Activated CD8-positive, alpha-beta T cell treated with anti-CD3 and anti-CD28 coated beads, Interleukin-2, amount 10 ng/mL, durations not matched to agents 7 days and 5 days (primary cell): ENCODE measurements at regions of chr19 and their contacts with region 1.

Region 1: GRCh38 chr19:45643024-45643926 is 4.1 kb upstream of the EML2 start:
- DNase-seq: peak; percentile 93
- ATAC-seq: peak; percentile 12
- H3K4me3 Mint-ChIP-seq: peak overlapping the region; percentile 54
- H3K27ac Mint-ChIP-seq: peak overlapping the region; percentile 87
- H3K4me1 Mint-ChIP-seq: peaks cover 65% of the 10 kb centered on the region
- H3K27me3 Mint-ChIP-seq: peaks cover 2% of the 10 kb centered on the region

Region 2: GRCh38 chr19:45346449-45346848 is 296.8 kb before region 1 on chr19:
- CTCF ChIA-PET with region 1: no interaction called
- POLR2A ChIA-PET with region 1: no interaction called
- DNase-seq: no peak
- ATAC-seq: no peak
- H3K4me3 Mint-ChIP-seq: no peak overlapping the region
- H3K27ac Mint-ChIP-seq: no peak overlapping the region
- H3K4me1 Mint-ChIP-seq: no peaks in the 10 kb centered on the region
- H3K27me3 Mint-ChIP-seq: peaks cover 7% of the 10 kb centered on the region

Region 3: DNA sequence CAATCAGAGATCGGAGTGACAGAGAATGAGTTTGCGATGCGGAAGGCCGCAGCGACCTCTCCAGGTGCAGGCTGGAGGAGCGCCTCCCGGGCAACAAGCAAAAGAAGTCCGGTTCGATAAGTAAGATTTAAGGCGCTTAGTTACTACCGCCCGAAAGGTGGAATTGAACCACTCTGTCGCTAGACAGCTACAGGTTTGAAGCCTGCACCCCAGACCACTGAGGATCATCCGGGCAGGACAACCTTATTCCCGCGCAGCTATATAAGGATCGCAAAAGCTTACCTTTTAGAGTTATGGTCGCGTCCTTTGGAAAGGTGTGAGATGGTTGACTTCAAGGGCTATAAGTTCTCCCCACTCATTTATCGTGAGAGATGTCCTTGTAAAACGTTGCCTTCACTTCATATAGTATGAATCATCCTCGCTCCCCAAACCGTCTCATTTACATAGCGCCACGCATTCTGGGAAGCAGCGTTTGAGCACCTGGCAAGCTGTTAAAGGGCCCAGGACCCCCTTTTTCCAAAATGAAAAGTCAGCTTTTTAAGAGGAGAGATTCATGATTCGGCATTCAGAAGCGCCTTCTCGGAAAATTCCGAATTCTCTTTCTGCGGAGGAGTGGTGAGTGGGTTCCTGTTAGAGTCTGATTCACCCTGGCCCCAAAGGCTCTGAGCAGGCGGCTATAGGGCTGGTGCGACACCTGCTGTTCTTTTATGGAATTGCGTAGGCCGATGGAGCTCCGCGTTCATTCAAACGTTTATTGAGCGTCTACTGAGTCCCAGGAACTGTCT is 164.6 kb before region 1 on chr19:
- CTCF ChIA-PET with region 1: interaction called, 25 read pairs
- POLR2A ChIA-PET with region 1: interaction called, 4 read pairs
- DNase-seq: peak; percentile 94
- ATAC-seq: peak; percentile 59
- H3K4me3 Mint-ChIP-seq: peak overlapping the region; percentile 53
- H3K27ac Mint-ChIP-seq: peak overlapping the region; percentile 96
- H3K4me1 Mint-ChIP-seq: peaks cover 34% of the 10 kb centered on the region
- H3K27me3 Mint-ChIP-seq: peaks cover 17% of the 10 kb centered on the region

Region 4: GRCh38 chr19:45558399-45558878 is 84.8 kb before region 1 on chr19:
- CTCF ChIA-PET with region 1: interaction called, 10 read pairs
- POLR2A ChIA-PET with region 1: no interaction called
- DNase-seq: peak; percentile 82
- ATAC-seq: peak; percentile 98
- H3K4me3 Mint-ChIP-seq: no peak overlapping the region
- H3K27ac Mint-ChIP-seq: peak overlapping the region; percentile 62
- H3K4me1 Mint-ChIP-seq: peaks cover 28% of the 10 kb centered on the region
- H3K27me3 Mint-ChIP-seq: no peaks in the 10 kb centered on the region

Region 5: GRCh38 chr19:45598267-45599001 is 44.8 kb before region 1 on chr19:
- CTCF ChIA-PET with region 1: interaction called, 47 read pairs
- POLR2A ChIA-PET with region 1: interaction called, 4 read pairs
- DNase-seq: no peak
- ATAC-seq: peak; percentile 36
- H3K4me3 Mint-ChIP-seq: peak overlapping the region; percentile 10
- H3K27ac Mint-ChIP-seq: no peak overlapping the region
- H3K4me1 Mint-ChIP-seq: peaks cover 32% of the 10 kb centered on the region
- H3K27me3 Mint-ChIP-seq: peaks cover 64% of the 10 kb centered on the region

Region 6: DNA sequence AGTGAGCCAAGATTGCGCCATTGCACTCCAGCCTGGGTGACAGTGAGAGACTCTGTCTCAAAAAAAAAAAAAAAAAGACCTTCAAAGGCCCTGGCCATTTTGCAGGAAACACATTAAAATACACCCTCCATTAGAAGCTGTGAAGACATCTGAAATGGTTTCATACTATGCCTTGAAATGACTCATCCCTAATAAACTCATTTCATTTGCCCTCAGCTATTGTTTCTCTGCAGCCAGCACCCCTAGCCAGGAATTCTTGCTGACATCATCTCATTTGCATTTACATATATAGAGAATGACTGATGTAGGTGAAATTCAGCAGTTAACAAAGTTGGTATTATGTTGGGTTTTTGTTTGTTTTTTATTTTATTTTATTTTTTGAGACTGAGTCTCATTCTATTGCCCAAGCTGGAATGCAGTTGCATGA is 12.8 kb before region 1 on chr19:
- CTCF ChIA-PET with region 1: interaction called, 18 read pairs
- POLR2A ChIA-PET with region 1: interaction called, 8 read pairs
- DNase-seq: no peak
- ATAC-seq: no peak
- H3K4me3 Mint-ChIP-seq: no peak overlapping the region
- H3K27ac Mint-ChIP-seq: no peak overlapping the region
- H3K4me1 Mint-ChIP-seq: peaks cover 6% of the 10 kb centered on the region
- H3K27me3 Mint-ChIP-seq: no peaks in the 10 kb centered on the region

Region 7: DNA sequence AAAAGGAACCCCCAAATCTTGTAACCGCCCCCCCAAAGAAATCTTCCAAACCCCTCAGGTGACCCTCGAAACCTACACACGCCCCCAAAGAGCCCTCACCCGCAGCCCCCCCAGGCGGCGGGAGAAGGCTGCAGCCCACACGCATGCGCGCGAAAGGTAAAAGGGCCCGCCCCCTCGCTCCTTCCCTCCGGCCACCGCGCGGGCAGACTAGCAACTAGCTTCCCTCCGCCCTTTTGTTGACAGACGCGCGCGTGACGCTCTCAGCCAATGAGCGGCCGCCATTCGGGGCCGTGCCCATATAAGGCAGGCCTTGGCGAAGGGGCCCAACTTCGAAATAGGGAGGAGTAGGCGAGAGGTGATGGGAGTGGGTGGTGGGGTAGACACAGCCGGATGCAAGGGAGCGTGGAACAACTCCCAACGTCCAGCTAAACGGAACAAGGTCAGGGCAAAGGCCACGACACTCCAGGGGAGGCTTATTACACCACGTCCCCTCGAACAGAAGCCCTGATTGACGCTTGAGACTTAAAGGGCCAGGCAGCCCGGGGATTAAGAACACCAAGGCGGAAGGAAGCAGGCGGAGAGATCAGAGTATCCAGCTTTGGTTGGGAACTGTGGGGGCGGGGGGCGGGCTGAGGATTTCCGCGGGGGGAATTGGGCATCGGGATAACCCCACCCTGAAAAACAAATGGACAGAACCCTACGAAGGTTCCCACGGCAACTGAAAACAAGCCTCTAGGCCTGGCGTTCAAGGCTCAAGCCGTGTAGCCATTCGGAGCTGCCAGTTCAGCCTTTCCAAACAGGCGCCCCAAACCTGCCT is 74.1 kb after region 1 on chr19:
- CTCF ChIA-PET with region 1: interaction called, 14 read pairs
- POLR2A ChIA-PET with region 1: interaction called, 4 read pairs
- DNase-seq: peak; percentile 99
- ATAC-seq: peak; percentile 99
- H3K4me3 Mint-ChIP-seq: peak overlapping the region; percentile 93
- H3K27ac Mint-ChIP-seq: peak overlapping the region; percentile 89
- H3K4me1 Mint-ChIP-seq: peaks cover 38% of the 10 kb centered on the region
- H3K27me3 Mint-ChIP-seq: no peaks in the 10 kb centered on the region